Posterior cingulate gyrus (tissue), 11 donors: ENCODE measurements at regions of chr17 and their contacts with region 1.

Region 1: GRCh38 chr17:54900457-54901229 is at the start of gene TOM1L1:
- DNase-seq: peak; percentile 33 to 96 (median 72)

Region 2: DNA sequence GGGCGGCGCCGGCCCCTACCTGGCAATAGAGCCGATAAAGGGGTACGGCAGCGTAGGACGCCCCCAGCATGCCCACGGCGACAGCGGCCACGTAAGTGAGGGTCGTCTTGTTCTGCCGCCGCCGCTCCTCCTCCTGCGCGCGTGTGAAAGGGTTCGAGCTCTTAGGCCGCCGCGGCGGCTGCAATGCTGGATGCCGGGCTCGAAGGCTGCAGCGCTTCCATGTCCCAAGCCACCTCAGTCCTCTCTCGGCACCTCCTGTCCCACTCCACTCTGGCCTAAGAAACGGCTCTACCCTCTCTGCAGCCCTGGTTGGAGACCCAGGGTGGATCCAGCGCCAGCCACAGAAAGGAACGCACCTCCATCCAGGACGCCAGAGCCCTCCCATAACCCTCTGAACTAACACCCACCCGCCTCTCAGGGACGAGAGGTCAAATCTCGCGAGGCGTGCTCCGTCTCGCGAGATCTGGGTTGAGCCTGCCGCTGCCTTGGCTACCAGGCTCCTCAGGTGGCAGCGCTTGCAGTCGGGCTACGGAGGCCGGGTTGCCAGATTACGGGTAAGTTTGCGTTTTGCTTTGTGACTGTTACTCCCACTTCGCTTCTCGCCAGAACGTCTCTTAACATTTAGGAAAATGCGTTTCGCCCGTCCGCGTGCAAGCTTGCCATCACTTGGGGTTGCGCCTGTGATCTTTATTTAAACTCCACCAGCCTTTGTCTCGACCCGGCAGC is 67.8 kb after region 1 on chr17 and contains the starts of genes COX11 and STXBP4:
- intact Hi-C with region 1: loop called (anchors 2 kb)
- DNase-seq: peak; percentile 87 to 99 (median 96)